Activated CD8-positive, alpha-beta T cell treated with anti-CD3 and anti-CD28 coated beads, Interleukin-2, amount 10 ng/mL, durations not matched to agents 7 days and 5 days (primary cell): ENCODE measurements at regions of chr20 and their contacts with region 1.

Region 1: DNA sequence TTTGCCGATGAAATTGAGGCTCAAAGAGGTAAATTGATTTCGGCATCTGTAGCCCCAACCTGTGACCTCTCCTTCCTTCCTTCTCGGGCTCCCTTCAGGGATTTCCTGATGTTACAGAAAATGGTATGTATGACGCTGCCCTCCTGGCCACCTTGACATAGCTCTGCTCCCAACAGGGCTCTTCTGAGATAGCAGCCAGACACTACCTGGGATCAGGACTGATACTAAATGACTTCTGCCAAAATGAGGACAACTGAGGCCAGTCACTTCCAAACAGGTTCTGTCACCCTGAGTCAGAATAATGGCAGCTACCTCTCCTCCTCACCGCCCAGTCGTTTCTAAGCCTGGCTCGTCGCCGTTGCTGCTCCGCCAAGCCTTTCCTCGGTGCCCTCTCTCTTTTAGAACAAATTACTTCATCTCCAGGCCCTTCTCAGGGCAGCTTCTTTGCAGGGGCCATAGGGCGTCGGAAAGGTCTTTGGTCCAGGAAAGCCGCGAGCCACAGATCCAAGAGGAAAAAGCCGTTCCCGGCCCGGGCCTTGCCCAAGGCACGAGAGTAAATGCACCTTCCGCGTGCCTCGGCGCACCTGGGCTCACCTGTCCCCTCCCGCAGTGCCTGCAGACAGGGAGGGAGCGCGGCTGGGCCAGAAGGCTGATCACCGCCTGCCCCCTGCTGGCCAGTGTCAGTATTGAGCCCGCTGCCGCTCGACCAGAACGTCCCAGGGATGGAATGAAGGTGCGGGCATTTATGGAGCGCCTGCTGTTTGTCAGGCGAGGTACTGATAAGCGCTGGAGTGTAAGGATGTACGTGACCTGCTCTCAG is 904 bp upstream of the LPIN3 start:
- DNase-seq: peak; percentile 87
- ATAC-seq: peak; percentile 95
- H3K4me3 Mint-ChIP-seq: peak overlapping the region; percentile 66
- H3K27ac Mint-ChIP-seq: peak overlapping the region; percentile 24
- H3K4me1 Mint-ChIP-seq: peaks cover 13% of the 10 kb centered on the region
- H3K27me3 Mint-ChIP-seq: peaks cover 8% of the 10 kb centered on the region

Region 2: GRCh38 chr20:41161886-41162285 is 177.8 kb before region 1 on chr20:
- CTCF ChIA-PET with region 1: interaction called, 12 read pairs
- POLR2A ChIA-PET with region 1: interaction called, 3 read pairs
- DNase-seq: no peak
- ATAC-seq: no peak
- H3K4me3 Mint-ChIP-seq: no peak overlapping the region
- H3K27ac Mint-ChIP-seq: peak overlapping the region; percentile 71
- H3K4me1 Mint-ChIP-seq: peaks cover 92% of the 10 kb centered on the region
- H3K27me3 Mint-ChIP-seq: no peaks in the 10 kb centered on the region

Region 3: DNA sequence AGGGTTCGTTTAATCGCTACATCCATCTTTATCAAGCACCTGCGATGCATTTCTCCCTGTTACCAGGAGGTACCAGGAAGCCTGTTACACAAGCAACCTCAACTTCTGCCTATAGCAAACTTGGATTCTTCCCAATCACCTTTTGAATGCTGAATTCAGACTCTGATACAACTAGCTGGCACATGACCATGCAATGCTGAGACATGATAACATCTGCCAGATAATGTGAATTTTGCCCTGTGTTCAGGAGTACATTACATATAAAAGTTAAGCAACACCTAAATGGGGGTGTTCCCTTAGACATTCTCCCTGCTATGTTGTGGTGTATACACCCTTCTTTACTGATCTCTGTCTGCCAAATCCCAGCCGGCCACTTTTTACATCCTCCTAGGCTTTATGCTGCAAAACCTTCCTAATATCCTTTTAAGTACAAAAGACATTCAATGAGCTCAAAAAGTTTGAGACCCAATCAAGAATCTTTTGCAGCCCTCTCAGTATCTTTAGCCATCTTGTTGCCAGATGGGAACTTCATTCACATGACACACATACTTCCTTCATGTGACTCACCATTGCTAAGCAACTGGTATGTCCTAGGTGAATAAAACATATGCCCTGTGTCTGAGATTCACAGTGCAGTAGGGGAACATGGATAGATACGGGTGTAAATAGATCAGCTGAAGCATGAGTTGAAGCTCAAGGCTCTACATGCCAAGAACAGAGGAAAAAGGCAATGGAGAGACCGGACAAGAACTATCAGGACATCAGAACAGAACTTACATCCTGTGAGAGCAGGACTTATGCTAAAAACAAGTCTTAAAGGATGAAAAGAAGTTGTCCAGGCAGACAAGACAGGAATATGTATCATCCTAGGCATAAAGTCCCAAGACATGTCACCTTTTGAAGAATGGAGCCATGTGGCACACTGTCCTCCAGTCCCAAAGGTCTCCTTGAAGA is 106.5 kb before region 1 on chr20:
- CTCF ChIA-PET with region 1: interaction called, 35 read pairs
- POLR2A ChIA-PET with region 1: no interaction called
- DNase-seq: no peak
- ATAC-seq: no peak
- H3K4me3 Mint-ChIP-seq: no peak overlapping the region
- H3K27ac Mint-ChIP-seq: no peak overlapping the region
- H3K4me1 Mint-ChIP-seq: peaks cover 38% of the 10 kb centered on the region
- H3K27me3 Mint-ChIP-seq: no peaks in the 10 kb centered on the region

Region 4: GRCh38 chr20:41242807-41243206 is 96.9 kb before region 1 on chr20:
- CTCF ChIA-PET with region 1: interaction called, 12 read pairs
- POLR2A ChIA-PET with region 1: no interaction called
- DNase-seq: peak; percentile 59
- ATAC-seq: peak; percentile 85
- H3K4me3 Mint-ChIP-seq: no peak overlapping the region
- H3K27ac Mint-ChIP-seq: peak overlapping the region; percentile 43
- H3K4me1 Mint-ChIP-seq: peaks cover 41% of the 10 kb centered on the region
- H3K27me3 Mint-ChIP-seq: no peaks in the 10 kb centered on the region

Region 5: DNA sequence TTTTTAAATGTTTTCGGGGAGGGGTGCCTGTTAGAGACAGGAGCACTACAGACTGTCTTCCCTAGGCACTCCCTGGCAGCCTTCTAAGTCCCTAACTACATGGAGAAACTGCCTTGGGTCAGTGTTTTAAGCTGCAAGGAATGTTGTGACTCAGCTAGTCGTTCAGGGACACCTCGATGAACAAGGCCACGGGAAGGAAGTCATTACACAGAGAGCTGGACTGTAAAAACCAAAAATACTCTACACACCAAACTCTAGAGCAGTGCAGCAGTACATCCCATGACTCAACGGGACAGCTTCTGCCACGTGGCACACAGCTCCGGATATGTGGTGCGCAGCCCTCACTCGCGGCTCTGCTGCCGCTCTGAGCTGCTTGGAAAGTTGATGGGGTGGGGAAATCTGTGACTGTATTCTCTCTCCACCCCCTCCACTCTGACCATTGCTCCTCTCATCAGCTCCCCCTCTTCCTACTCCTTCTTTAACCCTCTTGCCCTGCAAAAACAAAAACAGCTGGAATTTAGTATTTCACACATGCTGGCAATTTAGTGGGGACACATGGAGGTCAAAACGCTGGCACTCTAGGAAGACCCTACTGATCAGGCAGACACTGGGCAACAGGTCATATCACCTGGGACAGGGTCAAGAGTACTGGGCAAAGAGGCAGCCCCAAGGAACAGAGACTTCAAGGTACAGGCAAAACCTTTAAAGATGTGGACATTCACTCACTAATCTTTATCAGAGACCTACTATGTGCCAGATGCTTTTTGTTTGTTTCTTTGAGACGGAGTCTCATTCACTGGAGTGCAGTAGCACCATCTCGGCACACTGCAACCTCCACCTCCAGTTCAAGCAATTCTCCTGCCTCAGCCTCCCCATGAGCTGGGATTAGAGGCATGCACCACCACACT is 10.0 kb before region 1 on chr20:
- CTCF ChIA-PET with region 1: interaction called, 11 read pairs
- POLR2A ChIA-PET with region 1: no interaction called
- DNase-seq: peak; percentile 78
- ATAC-seq: peak; percentile 100
- H3K4me3 Mint-ChIP-seq: no peak overlapping the region
- H3K27ac Mint-ChIP-seq: peak overlapping the region; percentile 73
- H3K4me1 Mint-ChIP-seq: peaks cover 18% of the 10 kb centered on the region
- H3K27me3 Mint-ChIP-seq: peaks cover 4% of the 10 kb centered on the region

Region 6: DNA sequence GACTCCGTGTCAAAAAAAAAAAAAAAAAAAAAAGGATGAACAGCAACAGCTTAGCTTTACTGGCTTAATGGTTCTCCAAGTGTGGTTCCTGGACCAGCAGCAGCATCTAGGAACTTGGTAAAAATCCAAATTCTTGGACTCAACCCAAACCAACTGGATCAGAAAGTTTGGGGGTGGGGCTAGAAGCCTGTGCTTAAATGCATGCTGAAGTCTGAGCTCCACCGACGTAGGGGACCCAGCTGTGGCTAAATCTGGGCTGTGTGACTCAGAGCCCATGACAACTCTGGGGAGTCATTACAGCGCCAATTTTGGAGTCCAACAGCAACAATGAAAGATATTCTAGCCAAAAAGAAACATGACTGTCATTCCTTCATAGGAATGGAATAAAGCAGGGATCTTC is 292.1 kb after region 1 on chr20:
- CTCF ChIA-PET with region 1: no interaction called
- POLR2A ChIA-PET with region 1: no interaction called
- DNase-seq: no peak
- ATAC-seq: no peak
- H3K4me3 Mint-ChIP-seq: no peak overlapping the region
- H3K27ac Mint-ChIP-seq: no peak overlapping the region
- H3K4me1 Mint-ChIP-seq: no peaks in the 10 kb centered on the region
- H3K27me3 Mint-ChIP-seq: peaks cover 8% of the 10 kb centered on the region